GM23248 (cell line): ENCODE measurements at regions of chr17 and their contacts with region 1.

Region 1: GRCh38 chr17:20095336-20096080 is 86.3 kb downstream of the SPECC1 start:
- DNase-seq: peak; percentile 57
- H3K4me3 ChIP-seq: peak overlapping the region; percentile 23; the same call in 1 of the 2 replicates
- H3K27ac ChIP-seq: no peak overlapping the region
- H3K4me1 ChIP-seq: no peaks in the 10 kb centered on the region
- H3K27me3 ChIP-seq: peaks cover 27% of the 10 kb centered on the region

Region 2: DNA sequence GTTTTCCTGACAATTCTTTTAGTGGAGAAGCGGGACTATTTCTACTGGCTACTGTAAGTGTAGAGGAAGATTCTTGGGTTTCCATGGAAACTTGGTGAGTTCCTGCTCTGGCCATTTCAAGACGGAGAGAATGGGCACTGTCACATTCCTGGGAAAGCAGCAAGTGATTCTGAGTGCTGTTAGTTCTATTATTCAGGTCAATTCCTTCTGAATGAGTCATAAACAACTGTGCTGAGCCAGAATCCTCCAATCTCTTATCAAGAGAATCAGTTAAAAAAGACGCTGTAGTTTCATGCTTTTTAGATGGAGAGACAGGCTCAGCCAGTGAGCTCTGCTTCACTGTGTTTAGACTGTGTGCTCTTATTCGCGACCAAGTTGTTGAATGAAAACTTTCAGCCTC is 137.5 kb before region 1 on chr17:
- in situ Hi-C with region 1: no loop called
- DNase-seq: peak; percentile 80
- H3K4me3 ChIP-seq: no peak overlapping the region
- H3K27ac ChIP-seq: peak overlapping the region; percentile 67
- H3K4me1 ChIP-seq: peaks cover 12% of the 10 kb centered on the region
- H3K27me3 ChIP-seq: no peaks in the 10 kb centered on the region

Region 3: GRCh38 chr17:20189302-20189701 is 93.8 kb after region 1 on chr17:
- in situ Hi-C with region 1: loop called (anchors 25 kb)
- DNase-seq: peak; percentile 64
- H3K4me3 ChIP-seq: no peak overlapping the region
- H3K27ac ChIP-seq: no peak overlapping the region
- H3K4me1 ChIP-seq: peaks cover 6% of the 10 kb centered on the region; the same call in 1 of the 2 replicates
- H3K27me3 ChIP-seq: no peaks in the 10 kb centered on the region